ENCODE measurements at regions of chr4 and their contacts with region 1.

Region 1: GRCh38 chr4:83012687-83013419 is 2.2 kb upstream of the LIN54 start:
- DNase-seq: peak; percentile 99
- ATAC-seq: peak; percentile 88
- H3K4me3 Mint-ChIP-seq: peak overlapping the region; percentile 99
- H3K27ac Mint-ChIP-seq: peak overlapping the region; percentile 93
- H3K4me1 Mint-ChIP-seq: peaks cover 31% of the 10 kb centered on the region
- H3K27me3 Mint-ChIP-seq: no peaks in the 10 kb centered on the region

Region 2: GRCh38 chr4:82284858-82285805 is 727.7 kb before region 1 on chr4:
- CTCF ChIA-PET with region 1: no interaction called
- POLR2A ChIA-PET with region 1: no interaction called
- intact Hi-C with region 1: loop called in 1 of 2 experiments (anchors 10 kb)
- DNase-seq: peak; percentile 100
- ATAC-seq: peak; percentile 99
- H3K4me3 Mint-ChIP-seq: peak overlapping the region; percentile 68
- H3K27ac Mint-ChIP-seq: peak overlapping the region; percentile 62
- H3K4me1 Mint-ChIP-seq: peaks cover 13% of the 10 kb centered on the region
- H3K27me3 Mint-ChIP-seq: no peaks in the 10 kb centered on the region

Region 3: DNA sequence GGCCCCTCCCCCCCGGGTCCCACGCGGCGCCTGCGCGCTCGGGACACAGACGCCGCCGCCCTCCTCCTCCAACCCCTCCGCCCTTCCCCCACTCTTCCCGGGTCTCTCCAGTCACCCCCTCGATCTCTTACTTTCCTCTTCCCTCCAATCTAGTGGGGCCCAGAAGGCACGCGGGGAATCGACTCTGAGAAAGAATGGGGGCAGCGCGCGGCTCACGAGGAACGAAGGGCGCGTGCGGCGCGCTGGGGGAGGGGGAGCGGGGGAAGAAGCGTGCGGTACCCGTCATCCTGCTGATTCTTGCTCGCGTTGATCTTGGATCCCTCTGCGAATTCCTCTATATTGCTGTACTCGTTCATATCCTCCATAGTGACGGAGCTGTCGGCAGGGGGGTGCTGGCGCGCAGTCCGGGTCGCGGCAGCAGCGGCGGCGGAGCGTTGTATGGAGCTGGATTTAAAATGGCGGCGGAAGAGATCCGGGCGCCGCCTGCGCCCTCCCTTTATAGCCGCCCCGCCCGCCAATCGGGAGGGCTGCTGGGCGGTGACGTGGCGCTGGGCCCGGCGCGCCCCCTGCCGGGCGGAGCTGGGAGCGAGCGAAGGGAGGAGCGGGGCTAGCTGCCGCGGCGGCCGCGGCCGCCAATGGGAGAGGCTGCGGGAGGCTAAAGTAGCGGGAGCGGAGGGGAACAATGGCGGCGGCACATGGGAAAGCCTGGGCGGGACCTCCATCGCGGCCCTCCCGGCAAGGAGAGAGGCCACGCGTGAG is 583.7 kb before region 1 on chr4:
- CTCF ChIA-PET with region 1: no interaction called
- POLR2A ChIA-PET with region 1: interaction called, 4 read pairs
- intact Hi-C with region 1: loop called (anchors 1 to 5 kb)
- DNase-seq: peak; percentile 96
- ATAC-seq: peak; percentile 55
- H3K4me3 Mint-ChIP-seq: peak overlapping the region; percentile 94
- H3K27ac Mint-ChIP-seq: peak overlapping the region; percentile 99
- H3K4me1 Mint-ChIP-seq: peaks cover 50% of the 10 kb centered on the region
- H3K27me3 Mint-ChIP-seq: no peaks in the 10 kb centered on the region

Region 4: DNA sequence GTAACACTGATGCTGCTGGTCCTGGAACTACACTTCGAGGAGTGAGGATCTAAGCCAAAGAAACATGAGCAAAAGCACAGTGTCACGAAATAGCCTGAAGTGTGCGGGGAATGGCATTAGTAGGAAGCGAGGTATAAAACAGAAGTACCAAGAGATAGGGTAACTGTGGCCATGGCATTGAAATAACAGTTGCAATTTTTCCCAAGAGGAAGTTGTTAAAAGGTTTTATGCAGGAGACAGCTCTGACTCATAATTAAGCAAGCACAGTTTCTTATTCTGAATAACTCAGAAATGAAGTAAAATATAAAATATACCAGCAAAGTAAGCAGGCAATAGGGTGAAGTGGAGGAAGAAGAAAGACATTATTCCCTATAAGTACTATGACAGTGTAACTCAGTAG is 360.8 kb before region 1 on chr4:
- CTCF ChIA-PET with region 1: no interaction called
- POLR2A ChIA-PET with region 1: no interaction called
- intact Hi-C with region 1: no loop called
- DNase-seq: no peak
- ATAC-seq: no peak
- H3K4me3 Mint-ChIP-seq: no peak overlapping the region
- H3K27ac Mint-ChIP-seq: no peak overlapping the region
- H3K4me1 Mint-ChIP-seq: no peaks in the 10 kb centered on the region
- H3K27me3 Mint-ChIP-seq: peaks cover 3% of the 10 kb centered on the region

Region 5: GRCh38 chr4:82989575-82990429 is 23.1 kb before region 1 on chr4:
- CTCF ChIA-PET with region 1: no interaction called
- POLR2A ChIA-PET with region 1: no interaction called
- intact Hi-C with region 1: no loop called
- DNase-seq: peak; percentile 28
- ATAC-seq: peak; percentile 80
- H3K4me3 Mint-ChIP-seq: peak overlapping the region; percentile 3
- H3K27ac Mint-ChIP-seq: peak overlapping the region; percentile 6
- H3K4me1 Mint-ChIP-seq: peaks cover 16% of the 10 kb centered on the region
- H3K27me3 Mint-ChIP-seq: no peaks in the 10 kb centered on the region

Region 6: DNA sequence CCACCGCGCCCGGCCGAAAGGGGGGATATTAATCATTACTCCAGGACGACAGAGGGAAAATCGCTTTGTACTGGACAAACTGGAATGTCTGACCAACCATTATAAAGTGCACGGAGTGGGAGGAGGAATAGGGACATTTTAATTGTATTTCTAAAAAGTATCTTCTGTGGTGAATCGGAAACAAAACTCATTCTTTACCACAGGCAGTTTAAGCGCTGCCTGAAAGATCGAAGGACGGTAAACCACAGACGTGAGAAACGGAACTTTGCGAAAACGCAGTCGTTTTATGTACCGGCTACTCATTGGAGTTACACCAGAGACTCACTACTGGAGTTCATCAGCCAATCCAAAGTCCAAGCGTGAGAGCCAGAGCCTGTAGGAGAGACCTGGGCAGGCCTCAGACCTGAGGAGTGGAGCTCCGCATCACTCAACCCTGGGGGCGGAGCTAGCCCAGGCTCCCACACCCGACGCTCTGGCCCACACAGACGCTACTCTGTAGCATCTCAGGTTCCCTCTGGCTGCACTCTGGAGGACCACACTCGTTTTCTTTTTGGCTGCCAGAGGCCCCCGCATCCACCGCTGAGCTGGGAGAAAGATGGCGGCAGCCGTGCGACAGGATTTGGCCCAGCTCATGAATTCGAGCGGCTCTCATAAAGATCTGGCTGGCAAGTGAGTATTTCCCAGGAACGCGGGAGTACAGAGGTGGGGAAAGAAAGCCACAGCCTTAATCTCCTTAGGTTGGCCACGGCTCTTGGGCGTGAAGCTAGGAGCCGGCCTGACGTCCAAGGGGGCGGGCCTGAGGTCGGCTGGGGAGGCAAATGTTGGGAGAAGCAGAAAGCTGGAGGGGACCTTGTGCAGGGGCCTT is 22.0 kb after region 1 on chr4 and contains the start of gene COPS4:
- CTCF ChIA-PET with region 1: interaction called, 28 read pairs
- POLR2A ChIA-PET with region 1: interaction called, 34 read pairs
- intact Hi-C with region 1: loop called (anchors 1 kb)
- DNase-seq: peak; percentile 97
- ATAC-seq: peak; percentile 97
- H3K4me3 Mint-ChIP-seq: peak within 1 kb of the TSS; percentile 91
- H3K27ac Mint-ChIP-seq: peak within 1 kb of the TSS; percentile 94
- H3K4me1 Mint-ChIP-seq: peaks cover 22% of the 10 kb centered on the region
- H3K27me3 Mint-ChIP-seq: no peaks in the 10 kb centered on the region
- total RNA-seq, gene COPS4: 35.7 to 35.9 TPM

Region 7: GRCh38 chr4:83217721-83218522 is 205.1 kb after region 1 on chr4:
- CTCF ChIA-PET with region 1: no interaction called
- POLR2A ChIA-PET with region 1: no interaction called
- intact Hi-C with region 1: loop called in 1 of 2 experiments (anchors 1 kb)
- DNase-seq: peak; percentile 73
- ATAC-seq: peak; percentile 85
- H3K4me3 Mint-ChIP-seq: peak overlapping the region; percentile 20
- H3K27ac Mint-ChIP-seq: peak overlapping the region; percentile 76
- H3K4me1 Mint-ChIP-seq: peaks cover 79% of the 10 kb centered on the region
- H3K27me3 Mint-ChIP-seq: peaks cover 2% of the 10 kb centered on the region

Region 8: DNA sequence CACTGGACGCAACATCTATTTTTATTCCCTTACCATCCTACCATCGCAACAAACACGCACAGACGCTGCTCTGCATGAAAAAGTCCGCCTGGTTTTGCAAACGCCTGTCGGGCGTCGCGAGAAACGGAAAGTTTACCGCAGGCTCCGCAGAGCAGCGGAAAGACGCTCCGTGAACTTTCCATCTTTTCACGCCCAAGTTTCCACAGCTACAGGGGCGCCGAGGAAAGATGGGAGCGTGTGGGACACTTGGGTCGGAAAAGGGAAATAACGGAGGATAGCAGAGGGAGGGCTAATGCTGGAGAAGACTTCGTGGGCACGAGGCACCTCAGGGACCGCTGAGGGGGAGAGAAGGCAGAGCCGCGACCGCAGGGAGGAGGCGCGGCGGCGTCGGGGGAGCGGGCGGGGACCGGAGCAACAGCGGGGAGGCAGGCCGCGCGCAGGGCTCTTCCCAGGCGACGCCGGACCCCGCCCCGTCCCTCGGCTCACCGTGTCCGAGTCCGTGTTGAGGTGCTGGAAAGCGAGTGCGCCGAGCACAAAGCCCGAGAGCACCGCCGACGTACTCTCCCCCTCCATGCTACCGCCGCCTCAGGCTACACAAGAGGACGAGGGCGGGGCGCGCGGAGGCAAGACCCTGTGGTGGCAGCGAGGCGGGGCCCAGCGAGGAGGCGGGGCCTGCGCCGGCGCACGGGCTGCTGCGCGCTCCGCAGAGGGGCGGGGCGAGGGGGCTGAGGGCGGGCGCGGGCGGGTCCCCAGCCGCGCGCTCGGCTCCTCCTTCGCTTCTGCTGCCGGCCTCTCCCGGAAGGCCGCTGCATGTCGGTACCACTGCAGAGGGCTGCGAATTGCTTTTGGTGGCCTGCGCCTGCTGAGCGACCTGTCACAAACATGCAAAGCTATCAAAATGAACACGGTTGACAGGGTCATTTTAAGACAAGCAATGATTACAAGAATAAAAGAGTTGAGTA is 471.9 kb after region 1 on chr4 and contains the start of gene ABRAXAS1:
- CTCF ChIA-PET with region 1: no interaction called
- POLR2A ChIA-PET with region 1: no interaction called
- intact Hi-C with region 1: loop called in 1 of 2 experiments (anchors 1 kb)
- DNase-seq: peak; percentile 97
- ATAC-seq: peak; percentile 95
- H3K4me3 Mint-ChIP-seq: peak within 1 kb of the TSS; percentile 91
- H3K27ac Mint-ChIP-seq: peak within 1 kb of the TSS; percentile 94
- H3K4me1 Mint-ChIP-seq: peaks cover 10% of the 10 kb centered on the region
- H3K27me3 Mint-ChIP-seq: no peaks in the 10 kb centered on the region
- total RNA-seq, gene ABRAXAS1: 19.2 to 22.6 TPM

Region 9: DNA sequence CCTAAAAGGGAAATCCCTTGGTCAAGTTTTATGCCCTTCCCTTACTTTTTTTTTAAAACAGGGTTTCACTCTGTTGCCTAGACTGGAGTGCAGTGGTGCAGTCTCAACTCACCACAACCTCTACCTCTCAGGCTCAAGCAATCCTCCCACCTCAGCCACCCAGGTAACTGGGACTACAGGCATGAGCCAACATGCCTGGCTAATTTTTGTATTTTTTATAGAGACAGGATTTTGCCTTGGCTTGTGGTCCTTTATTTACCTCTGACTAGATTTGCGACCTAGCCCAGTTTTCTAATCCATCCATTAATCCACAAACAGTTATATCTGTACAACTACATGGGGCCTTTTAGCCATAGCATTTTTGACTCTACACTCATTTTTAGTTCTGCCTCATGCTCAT is 1593.8 kb after region 1 on chr4:
- CTCF ChIA-PET with region 1: no interaction called
- POLR2A ChIA-PET with region 1: no interaction called
- intact Hi-C with region 1: no loop called
- DNase-seq: no peak
- ATAC-seq: no peak
- H3K4me3 Mint-ChIP-seq: no peak overlapping the region
- H3K27ac Mint-ChIP-seq: no peak overlapping the region
- H3K4me1 Mint-ChIP-seq: no peaks in the 10 kb centered on the region
- H3K27me3 Mint-ChIP-seq: no peaks in the 10 kb centered on the region

Measured in activated CD4-positive, alpha-beta T cell treated with anti-CD3 and anti-CD28 coated beads for 36 hours (primary cell).